ENCODE measurements at regions of chr1 and their contacts with region 1.

Region 1: DNA sequence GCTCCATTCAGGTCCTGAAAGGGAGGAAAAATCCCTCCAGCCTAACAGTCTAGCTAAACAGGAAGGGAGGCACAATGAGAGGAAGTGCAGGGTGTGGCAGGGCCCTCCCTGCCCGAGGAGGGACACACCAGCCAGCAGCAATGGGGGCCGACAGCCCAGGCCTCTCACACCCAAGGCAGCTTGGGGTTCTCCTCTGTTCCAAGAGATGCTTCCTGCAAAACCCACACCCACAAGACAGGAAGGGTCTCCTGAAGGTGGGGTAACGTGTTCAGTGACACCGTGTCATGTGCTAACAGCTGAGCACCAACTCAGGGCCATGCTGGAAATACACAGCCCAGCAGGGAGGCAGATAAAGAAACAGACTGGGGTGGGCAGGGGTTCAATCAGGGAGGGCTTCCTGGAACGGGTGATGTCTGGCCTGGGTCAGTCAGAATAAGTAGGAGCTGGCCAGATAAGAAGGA is 10.2 kb downstream of the ECE1 start:
- DNase-seq: no peak
- H3K4me3 ChIP-seq: peak overlapping the region in 1 of 2 donors; percentile 17
- H3K4me3 Mint-ChIP-seq: peak overlapping the region; percentile 76 to 90 (median 82)
- H3K27ac ChIP-seq: peak overlapping the region; percentile 61
- H3K27ac Mint-ChIP-seq: peak overlapping the region; percentile 95 to 99 (median 98)
- H3K4me1 ChIP-seq: peaks cover 43% of the 10 kb centered on the region
- H3K4me1 Mint-ChIP-seq: peaks cover 36 to 65% (median 51%) of the 10 kb centered on the region in 4 donors
- H3K27me3 ChIP-seq: no peaks in the 10 kb centered on the region
- H3K27me3 Mint-ChIP-seq: no peaks in the 10 kb centered on the region

Region 2: DNA sequence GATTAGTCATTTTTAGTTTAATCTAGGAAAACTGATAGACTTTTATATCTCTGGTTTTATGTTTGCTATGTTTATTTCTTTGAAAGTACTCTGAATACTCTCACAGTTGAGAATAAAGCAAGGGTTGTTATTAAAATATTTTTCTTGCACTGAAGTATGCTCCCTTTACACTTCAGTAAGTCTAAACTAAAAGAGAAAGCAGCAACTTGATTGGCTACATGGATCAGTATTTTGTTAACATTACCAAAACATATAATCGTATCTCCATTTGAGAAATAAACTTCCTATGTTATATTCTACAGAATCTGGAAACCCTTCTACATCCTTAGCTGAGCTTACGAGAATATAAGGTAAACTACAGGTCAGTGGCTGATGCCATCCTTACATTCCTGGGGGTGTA is 343.4 kb before region 1 on chr1:
- CTCF ChIA-PET with region 1: no interaction called
- POLR2A ChIA-PET with region 1: no interaction called
- intact Hi-C with region 1: no loop called
- DNase-seq: no peak
- H3K4me3 ChIP-seq: no peak overlapping the region
- H3K4me3 Mint-ChIP-seq: no peak overlapping the region
- H3K27ac ChIP-seq: no peak overlapping the region
- H3K27ac Mint-ChIP-seq: no peak overlapping the region
- H3K4me1 ChIP-seq: peaks cover 17% of the 10 kb centered on the region
- H3K4me1 Mint-ChIP-seq: peaks cover 14 to 26% (median 18%) of the 10 kb centered on the region in 4 donors
- H3K27me3 ChIP-seq: no peaks in the 10 kb centered on the region
- H3K27me3 Mint-ChIP-seq: no peaks in the 10 kb centered on the region

Region 3: GRCh38 chr1:21117597-21118001 is 162.4 kb before region 1 on chr1:
- CTCF ChIA-PET with region 1: no interaction called
- POLR2A ChIA-PET with region 1: no interaction called
- intact Hi-C with region 1: no loop called
- DNase-seq: no peak
- H3K4me3 ChIP-seq: no peak overlapping the region
- H3K4me3 Mint-ChIP-seq: no peak overlapping the region
- H3K27ac ChIP-seq: no peak overlapping the region
- H3K27ac Mint-ChIP-seq: no peak overlapping the region
- H3K4me1 ChIP-seq: no peaks in the 10 kb centered on the region
- H3K4me1 Mint-ChIP-seq: no peaks in the 10 kb centered on the region
- H3K27me3 ChIP-seq: no peaks in the 10 kb centered on the region
- H3K27me3 Mint-ChIP-seq: no peaks in the 10 kb centered on the region

Region 4: DNA sequence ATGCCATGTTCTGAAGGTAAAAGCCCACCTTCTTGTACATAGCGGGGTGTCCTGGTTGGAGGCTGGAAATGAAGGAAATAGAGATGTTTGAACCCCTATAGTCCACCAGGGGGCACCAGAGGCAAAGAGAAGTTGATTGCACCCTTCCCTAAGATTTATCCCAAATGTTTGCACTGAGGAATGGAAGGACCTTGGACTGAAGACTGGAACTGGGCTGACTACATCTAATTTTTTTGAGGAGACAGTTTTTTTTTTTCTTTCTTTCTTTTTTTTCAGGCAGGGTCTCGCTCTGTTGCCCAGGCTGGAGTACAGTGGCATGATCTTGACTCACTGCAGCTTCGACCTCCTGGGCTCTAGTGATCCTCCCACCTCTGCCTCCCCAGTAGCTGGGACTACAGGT is 48.0 kb before region 1 on chr1:
- CTCF ChIA-PET with region 1: no interaction called
- POLR2A ChIA-PET with region 1: no interaction called
- intact Hi-C with region 1: no loop called
- DNase-seq: peak in 4 of 5 donors; percentile 33 to 49 (median 39)
- H3K4me3 ChIP-seq: no peak overlapping the region
- H3K4me3 Mint-ChIP-seq: no peak overlapping the region
- H3K27ac ChIP-seq: no peak overlapping the region
- H3K27ac Mint-ChIP-seq: peak overlapping the region in 4 of 7 donors; percentile 6 to 77 (median 44)
- H3K4me1 ChIP-seq: no peaks in the 10 kb centered on the region
- H3K4me1 Mint-ChIP-seq: peaks cover 0 to 2% (median 0%) of the 10 kb centered on the region in 4 donors
- H3K27me3 ChIP-seq: no peaks in the 10 kb centered on the region
- H3K27me3 Mint-ChIP-seq: no peaks in the 10 kb centered on the region

Region 5: GRCh38 chr1:21324368-21325141 is 44.5 kb after region 1 on chr1:
- CTCF ChIA-PET with region 1: no interaction called
- POLR2A ChIA-PET with region 1: interaction called, 35 read pairs
- intact Hi-C with region 1: no loop called
- DNase-seq: peak; percentile 24 to 82 (median 48)
- H3K4me3 ChIP-seq: peak overlapping the region; percentile 9 to 25
- H3K4me3 Mint-ChIP-seq: peak overlapping the region; percentile 65 to 93 (median 84)
- H3K27ac ChIP-seq: peak overlapping the region; percentile 36
- H3K27ac Mint-ChIP-seq: peak overlapping the region; percentile 92 to 96 (median 94)
- H3K4me1 ChIP-seq: peaks cover 71% of the 10 kb centered on the region
- H3K4me1 Mint-ChIP-seq: peaks cover 41 to 95% (median 75%) of the 10 kb centered on the region in 4 donors
- H3K27me3 ChIP-seq: no peaks in the 10 kb centered on the region
- H3K27me3 Mint-ChIP-seq: no peaks in the 10 kb centered on the region

Region 6: DNA sequence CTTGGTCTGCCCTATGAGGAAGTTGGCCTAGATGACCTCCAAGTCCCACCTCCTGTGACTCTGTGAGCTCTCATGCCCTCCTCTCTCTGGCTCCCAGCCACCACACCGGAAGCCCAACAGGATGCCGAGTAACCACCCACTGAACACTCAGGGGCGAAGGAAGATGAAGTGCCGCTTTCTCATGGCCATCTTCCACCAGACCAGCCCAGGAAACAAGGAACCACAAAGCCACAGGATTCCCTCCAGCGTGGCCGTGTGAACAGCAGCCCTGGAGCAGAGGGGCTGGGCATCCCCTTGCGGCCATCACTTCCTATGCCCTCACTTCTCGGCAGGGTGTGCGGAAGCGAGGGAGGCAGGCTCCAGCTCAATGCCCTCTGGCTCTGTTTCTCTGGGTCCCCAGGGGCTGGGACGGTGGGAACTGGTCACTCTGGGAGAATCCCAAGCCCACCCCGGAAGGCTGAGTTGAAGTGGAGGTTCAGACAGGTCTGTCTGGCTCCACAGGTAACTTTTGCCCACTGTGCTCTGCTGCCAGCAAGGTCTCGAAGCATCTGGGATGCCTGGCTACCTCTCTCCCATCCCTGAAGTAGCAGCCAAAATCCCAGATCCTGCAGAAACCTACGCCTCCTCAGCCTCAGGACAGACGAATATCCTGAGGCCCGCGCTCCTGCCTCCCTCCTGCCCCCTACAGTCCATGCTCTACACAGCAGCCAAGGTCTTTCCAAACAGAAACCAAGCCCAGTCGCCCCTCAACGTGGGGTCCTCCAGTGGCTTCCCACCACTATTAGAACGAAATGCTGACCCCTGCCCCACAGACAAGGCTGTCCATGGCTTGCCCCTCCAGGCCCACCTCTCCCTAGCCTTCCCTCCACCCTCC is 54.4 kb after region 1 on chr1:
- CTCF ChIA-PET with region 1: interaction called, 19 read pairs
- POLR2A ChIA-PET with region 1: interaction called, 14 read pairs
- intact Hi-C with region 1: loop called (anchors 2 kb)
- DNase-seq: peak; percentile 87 to 93 (median 89)
- H3K4me3 ChIP-seq: peak overlapping the region; percentile 17 to 44
- H3K4me3 Mint-ChIP-seq: peak overlapping the region; percentile 80 to 94 (median 90)
- H3K27ac ChIP-seq: peak overlapping the region; percentile 82
- H3K27ac Mint-ChIP-seq: peak overlapping the region; percentile 92 to 99 (median 98)
- H3K4me1 ChIP-seq: peaks cover 94% of the 10 kb centered on the region
- H3K4me1 Mint-ChIP-seq: peaks cover 62 to 98% (median 81%) of the 10 kb centered on the region in 4 donors
- H3K27me3 ChIP-seq: no peaks in the 10 kb centered on the region
- H3K27me3 Mint-ChIP-seq: no peaks in the 10 kb centered on the region

Region 7: DNA sequence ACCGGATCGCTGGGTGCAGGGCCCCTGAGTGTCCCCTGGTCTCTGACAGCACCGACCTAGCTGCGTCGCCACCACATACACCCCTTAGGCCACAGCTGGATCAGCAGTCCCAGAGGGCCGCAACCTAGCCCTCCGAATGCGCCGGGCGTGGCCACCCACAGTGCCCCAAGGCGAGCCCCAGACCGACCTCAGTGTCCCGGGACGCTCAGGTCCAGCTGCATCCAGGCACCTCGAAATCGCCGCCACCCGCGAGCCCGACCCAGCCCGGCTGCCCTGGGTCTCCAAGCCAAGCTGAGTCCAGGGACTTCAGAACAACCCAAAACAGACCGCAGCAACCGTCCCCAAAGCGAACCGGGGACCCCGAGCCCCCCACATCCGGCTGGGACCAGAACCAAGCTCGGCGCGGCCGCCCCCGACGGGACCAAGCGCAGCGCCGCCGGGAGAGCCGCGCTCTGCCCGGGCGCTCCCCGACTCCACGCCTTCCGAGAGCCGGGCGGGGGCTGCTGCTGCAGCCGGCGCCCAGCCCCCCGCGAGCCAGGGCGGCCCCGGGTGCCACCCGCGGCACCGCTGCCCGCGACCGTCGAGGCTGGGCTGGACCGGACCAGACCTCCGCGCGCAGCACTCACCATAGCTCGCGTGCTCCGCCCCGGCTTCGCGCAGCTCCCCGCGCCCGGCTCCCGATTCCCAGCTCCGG is 64.9 kb after region 1 on chr1:
- CTCF ChIA-PET with region 1: interaction called, 6 read pairs
- POLR2A ChIA-PET with region 1: interaction called, 37 read pairs
- intact Hi-C with region 1: no loop called
- DNase-seq: peak in 1 of 5 donors; percentile 48
- H3K4me3 ChIP-seq: peak overlapping the region; percentile 57 to 80
- H3K4me3 Mint-ChIP-seq: peak overlapping the region; percentile 79 to 92 (median 90)
- H3K27ac ChIP-seq: peak overlapping the region; percentile 59
- H3K27ac Mint-ChIP-seq: peak overlapping the region; percentile 85 to 93 (median 90)
- H3K4me1 ChIP-seq: peaks cover 53% of the 10 kb centered on the region
- H3K4me1 Mint-ChIP-seq: peaks cover 31 to 48% (median 40%) of the 10 kb centered on the region in 4 donors
- H3K27me3 ChIP-seq: no peaks in the 10 kb centered on the region
- H3K27me3 Mint-ChIP-seq: no peaks in the 10 kb centered on the region

Measured in CD4-positive, alpha-beta memory T cell (primary cell).